Activated CD4-positive, alpha-beta memory T cell treated with anti-CD3 and anti-CD28 coated beads for 36 hours (primary cell): ENCODE measurements at regions of chr2 and their contacts with region 1.

Region 1: DNA sequence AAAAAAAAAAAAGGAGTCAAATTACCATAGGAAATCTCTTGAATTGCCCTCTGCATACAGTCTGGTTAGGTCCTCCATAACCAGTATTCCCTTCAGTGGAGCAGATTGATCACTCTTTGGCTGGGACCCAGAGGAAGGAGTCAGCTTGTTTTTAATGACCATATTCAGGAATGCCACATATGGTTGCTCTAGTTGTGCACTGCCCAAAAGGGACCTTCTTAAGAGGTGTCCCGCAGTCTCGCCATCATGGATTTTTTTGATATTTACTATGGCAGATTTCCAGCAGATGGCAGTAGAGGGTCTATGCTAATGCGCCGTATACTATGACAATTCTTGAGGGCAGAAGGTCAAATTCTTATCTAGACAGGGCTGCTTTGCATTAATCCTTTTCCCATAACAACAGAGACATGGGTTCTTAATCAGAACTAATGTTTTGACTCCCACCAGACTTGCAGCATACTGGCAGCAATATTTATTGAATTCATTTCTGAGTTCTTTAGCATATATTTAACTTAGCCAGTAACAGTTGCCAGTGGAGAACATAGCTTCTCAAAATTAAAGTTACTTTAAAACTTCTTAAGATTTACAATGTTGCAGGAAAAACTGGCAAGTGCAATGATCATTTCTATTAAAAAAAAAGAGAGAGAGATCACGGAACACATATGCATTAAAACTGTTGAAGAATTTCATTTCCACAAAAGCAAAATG is 31.8 kb upstream of the INPP4A start:
- DNase-seq: peak; percentile 61
- H3K4me3 Mint-ChIP-seq: no peak overlapping the region
- H3K27ac Mint-ChIP-seq: no peak overlapping the region
- H3K4me1 Mint-ChIP-seq: peaks cover 8% of the 10 kb centered on the region
- H3K27me3 Mint-ChIP-seq: no peaks in the 10 kb centered on the region

Region 2: GRCh38 chr2:98378930-98379671 is 33.8 kb before region 1 on chr2:
- CTCF ChIA-PET with region 1: no interaction called
- POLR2A ChIA-PET with region 1: no interaction called
- intact Hi-C with region 1: no loop called
- DNase-seq: no peak
- H3K4me3 Mint-ChIP-seq: no peak overlapping the region
- H3K27ac Mint-ChIP-seq: no peak overlapping the region
- H3K4me1 Mint-ChIP-seq: no peaks in the 10 kb centered on the region
- H3K27me3 Mint-ChIP-seq: peaks cover 9% of the 10 kb centered on the region

Region 3: DNA sequence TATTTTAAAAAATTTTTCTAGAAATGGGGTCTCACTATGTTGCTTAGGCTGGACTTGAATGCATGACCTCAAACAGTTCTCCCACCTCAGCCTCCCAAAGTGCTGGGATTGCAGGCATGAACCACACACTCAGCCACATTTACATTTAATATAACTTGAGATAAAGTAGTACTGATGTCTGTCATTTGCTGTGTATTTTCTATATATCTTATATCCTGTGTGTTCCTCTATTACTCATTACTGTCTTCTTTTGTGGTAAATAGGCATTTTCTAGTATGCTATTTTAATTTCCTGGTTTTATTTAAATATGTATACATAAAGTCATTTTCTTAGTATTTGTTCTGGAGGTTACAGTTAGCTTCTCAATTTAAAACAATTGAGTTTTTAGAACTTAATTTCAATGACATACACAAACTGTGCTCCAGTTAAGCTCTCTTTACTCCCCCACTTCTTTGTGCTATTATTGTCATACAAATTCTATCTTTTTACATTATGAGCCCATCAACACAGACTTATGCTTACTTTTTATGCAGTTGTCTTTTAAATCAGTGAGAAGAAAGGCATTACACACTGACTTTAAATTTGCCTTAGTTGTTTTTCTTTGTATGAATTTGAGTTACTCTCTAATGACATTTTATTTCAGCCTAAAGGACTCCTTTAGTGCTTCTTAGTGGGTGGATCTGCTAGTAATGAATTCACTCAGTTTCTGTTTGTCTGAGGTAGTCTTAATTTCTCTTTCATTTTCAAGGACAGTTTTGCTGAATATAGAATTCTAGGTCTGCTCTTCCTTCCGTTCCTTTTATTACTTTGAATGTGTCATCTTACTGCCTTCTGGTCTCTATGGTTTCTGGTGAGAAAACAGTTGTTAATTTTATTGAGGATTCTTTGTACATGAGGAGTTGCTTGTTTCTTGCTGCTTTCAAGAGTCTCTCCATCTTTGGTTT is 25.6 kb after region 1 on chr2:
- CTCF ChIA-PET with region 1: interaction called, 7 read pairs
- POLR2A ChIA-PET with region 1: no interaction called
- intact Hi-C with region 1: loop called (anchors 2 kb)
- DNase-seq: no peak
- H3K4me3 Mint-ChIP-seq: peak overlapping the region; percentile 8
- H3K27ac Mint-ChIP-seq: peak overlapping the region; percentile 73
- H3K4me1 Mint-ChIP-seq: peaks cover 27% of the 10 kb centered on the region
- H3K27me3 Mint-ChIP-seq: no peaks in the 10 kb centered on the region

Region 4: DNA sequence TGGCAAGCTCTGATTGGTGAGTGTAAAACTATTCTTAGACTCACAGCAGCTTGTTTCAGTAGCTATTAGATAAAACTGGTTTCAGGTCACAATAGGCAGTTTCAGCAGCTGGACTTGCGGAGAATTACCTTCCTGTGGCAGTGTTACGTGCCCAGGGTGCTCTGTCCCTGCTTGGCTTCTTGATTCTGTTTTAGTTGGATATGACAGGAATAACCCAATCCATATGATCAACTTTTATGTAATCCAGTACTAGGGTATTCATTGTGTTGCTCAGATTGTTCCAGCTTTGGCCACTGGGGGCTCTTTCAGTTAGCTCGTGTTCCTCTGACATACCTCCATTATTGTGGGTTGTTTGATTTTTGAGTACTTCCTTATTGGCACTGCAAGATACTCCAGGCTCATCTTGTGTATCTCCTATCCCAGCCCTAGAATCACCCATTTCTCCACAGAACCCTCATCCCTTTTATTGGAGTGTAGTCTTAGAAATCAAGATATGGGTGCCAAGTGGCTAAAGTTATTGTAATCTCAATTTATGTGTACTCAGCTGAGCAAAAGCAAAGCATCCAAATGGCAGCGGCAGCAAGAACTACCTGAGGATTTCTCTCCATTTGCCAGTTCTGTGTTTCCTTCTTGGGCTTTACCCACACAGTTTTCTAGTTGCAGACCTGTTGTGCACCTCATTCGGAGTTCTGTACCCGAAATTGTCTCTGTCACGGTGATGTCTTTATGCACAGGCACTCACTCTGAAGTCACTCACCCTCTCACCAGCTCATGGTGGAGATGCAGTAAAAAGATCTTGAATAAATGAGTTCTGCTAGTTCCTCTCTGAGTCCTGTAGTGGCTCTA is 75.1 kb after region 1 on chr2:
- CTCF ChIA-PET with region 1: interaction called, 15 read pairs
- POLR2A ChIA-PET with region 1: no interaction called
- intact Hi-C with region 1: no loop called
- DNase-seq: peak; percentile 62
- H3K4me3 Mint-ChIP-seq: no peak overlapping the region
- H3K27ac Mint-ChIP-seq: no peak overlapping the region
- H3K4me1 Mint-ChIP-seq: peaks cover 87% of the 10 kb centered on the region
- H3K27me3 Mint-ChIP-seq: no peaks in the 10 kb centered on the region

Region 5: DNA sequence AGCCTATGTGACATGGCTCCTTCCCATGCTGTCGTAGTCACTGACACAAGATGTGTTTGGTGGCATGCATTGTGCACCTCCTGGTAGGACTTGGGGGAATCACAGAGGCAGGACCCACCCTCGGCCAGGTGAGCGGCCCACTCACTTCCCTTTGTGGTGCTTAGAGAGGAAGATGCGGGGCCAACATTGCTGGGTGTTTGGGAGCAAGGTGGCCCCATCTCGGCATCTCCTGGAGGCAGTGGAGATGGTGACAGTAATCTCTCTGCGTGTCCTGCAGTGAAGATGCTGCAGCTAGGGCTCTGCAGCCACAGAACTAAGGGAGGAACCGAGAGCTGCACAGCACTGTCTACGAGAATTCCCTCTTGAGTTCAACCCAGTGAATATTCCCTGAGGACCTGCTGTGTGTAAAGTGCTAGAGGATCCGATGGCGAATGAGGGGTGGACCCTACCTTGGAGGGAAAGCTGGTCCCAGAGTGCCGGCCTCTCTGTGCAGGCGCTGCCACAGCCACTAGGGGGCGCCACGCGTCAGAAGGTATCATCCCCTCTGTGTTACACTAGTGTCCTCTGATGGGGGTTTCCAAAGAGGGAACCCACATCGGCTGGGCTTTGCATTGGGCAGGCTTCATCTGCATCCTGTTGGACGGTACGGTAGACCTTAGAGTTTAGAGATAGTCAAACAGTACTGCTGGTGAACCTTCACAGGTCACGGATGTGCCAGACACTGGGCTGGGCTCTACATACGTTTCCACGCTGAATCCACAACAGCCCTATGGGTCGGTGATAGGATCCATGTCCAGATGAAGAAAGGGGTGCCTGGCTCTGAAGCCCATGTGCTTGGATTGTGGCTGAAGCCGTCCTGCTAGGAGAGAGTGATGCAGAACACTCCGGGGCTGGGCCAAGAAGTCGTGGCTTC is 156.2 kb after region 1 on chr2:
- CTCF ChIA-PET with region 1: interaction called, 21 read pairs
- POLR2A ChIA-PET with region 1: no interaction called
- intact Hi-C with region 1: no loop called
- DNase-seq: peak; percentile 80
- H3K4me3 Mint-ChIP-seq: no peak overlapping the region
- H3K27ac Mint-ChIP-seq: peak overlapping the region; percentile 49
- H3K4me1 Mint-ChIP-seq: no peaks in the 10 kb centered on the region
- H3K27me3 Mint-ChIP-seq: no peaks in the 10 kb centered on the region

Region 6: GRCh38 chr2:98835831-98836385 is 423.0 kb after region 1 on chr2:
- CTCF ChIA-PET with region 1: interaction called, 3 read pairs
- POLR2A ChIA-PET with region 1: no interaction called
- intact Hi-C with region 1: loop called (anchors 1 kb)
- DNase-seq: peak; percentile 56
- H3K4me3 Mint-ChIP-seq: peak overlapping the region; percentile 6
- H3K27ac Mint-ChIP-seq: peak overlapping the region; percentile 21
- H3K4me1 Mint-ChIP-seq: peaks cover 35% of the 10 kb centered on the region
- H3K27me3 Mint-ChIP-seq: no peaks in the 10 kb centered on the region